ENCODE measurements at regions of chr11 and their contacts with region 1.

Region 1: GRCh38 chr11:58524232-58525036 is 16.5 kb upstream of the OR5B21 start:
- DNase-seq: peak in 1 of 2 donors; percentile 49
- ATAC-seq: peak; percentile 54 to 82
- H3K4me3 ChIP-seq: no peak overlapping the region
- H3K27ac ChIP-seq: no peak overlapping the region
- H3K4me1 ChIP-seq: no peaks in the 10 kb centered on the region
- H3K27me3 ChIP-seq: no peaks in the 10 kb centered on the region
- CTCF ChIP-seq: peak; percentile 40 to 70 (median 48)
- POLR2A ChIP-seq: no peak

Region 2: DNA sequence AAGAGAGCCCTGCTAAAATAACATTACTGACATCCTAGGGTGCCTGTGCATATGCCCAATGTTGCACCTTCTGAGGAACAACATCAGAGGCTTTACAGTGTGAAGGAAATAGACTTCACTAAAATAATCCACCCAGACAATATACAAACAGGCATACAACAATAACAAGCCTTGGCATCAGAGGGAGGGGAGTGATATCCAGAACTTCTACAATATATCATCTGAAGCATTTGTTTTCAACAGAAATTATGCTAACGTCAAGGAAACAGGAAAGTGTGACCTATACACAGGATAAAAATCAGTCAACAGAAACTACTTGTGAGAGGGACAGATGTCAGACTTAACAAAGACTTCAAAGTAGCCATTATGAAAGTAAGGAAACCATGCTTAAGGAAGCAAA is 681.6 kb before region 1 on chr11:
- in situ Hi-C with region 1: loop called in 1 of 4 experiments (anchors 25 kb)
- intact Hi-C with region 1: no loop called
- DNase-seq: no peak
- ATAC-seq: no peak
- H3K4me3 ChIP-seq: no peak overlapping the region
- H3K27ac ChIP-seq: no peak overlapping the region
- H3K4me1 ChIP-seq: no peaks in the 10 kb centered on the region
- H3K27me3 ChIP-seq: no peaks in the 10 kb centered on the region
- CTCF ChIP-seq: no peak
- POLR2A ChIP-seq: no peak

Region 3: DNA sequence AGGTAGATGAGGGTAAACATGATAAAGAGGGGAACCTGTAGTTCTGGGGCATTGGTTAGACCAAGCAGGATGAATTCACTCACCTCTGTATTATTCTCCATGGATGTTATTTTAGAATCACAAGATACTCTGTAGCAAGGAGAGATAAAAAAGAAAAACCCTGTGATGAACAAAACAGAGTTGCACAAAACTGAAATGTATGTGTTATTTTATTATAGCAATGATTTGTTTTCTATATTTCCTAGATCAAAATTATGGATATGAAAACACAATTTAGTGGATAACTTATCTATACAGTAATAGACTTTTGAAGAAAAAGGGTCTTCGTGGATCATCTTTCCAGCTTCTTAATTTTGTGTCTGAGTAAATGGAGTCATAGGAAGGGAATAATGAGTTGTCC is 165.5 kb before region 1 on chr11 and contains the start of gene OR5B17:
- in situ Hi-C with region 1: no loop called
- intact Hi-C with region 1: no loop called
- DNase-seq: no peak
- ATAC-seq: no peak
- H3K4me3 ChIP-seq: no peak within 1 kb of the TSS
- H3K27ac ChIP-seq: no peak within 1 kb of the TSS
- H3K4me1 ChIP-seq: no peaks in the 10 kb centered on the region
- H3K27me3 ChIP-seq: no peaks in the 10 kb centered on the region
- CTCF ChIP-seq: no peak
- POLR2A ChIP-seq: no peak
- total RNA-seq, gene OR5B17: not detected